Right lobe of liver (tissue), 6 donors: ENCODE measurements at regions of chr16 and their contacts with region 1.

Region 1: DNA sequence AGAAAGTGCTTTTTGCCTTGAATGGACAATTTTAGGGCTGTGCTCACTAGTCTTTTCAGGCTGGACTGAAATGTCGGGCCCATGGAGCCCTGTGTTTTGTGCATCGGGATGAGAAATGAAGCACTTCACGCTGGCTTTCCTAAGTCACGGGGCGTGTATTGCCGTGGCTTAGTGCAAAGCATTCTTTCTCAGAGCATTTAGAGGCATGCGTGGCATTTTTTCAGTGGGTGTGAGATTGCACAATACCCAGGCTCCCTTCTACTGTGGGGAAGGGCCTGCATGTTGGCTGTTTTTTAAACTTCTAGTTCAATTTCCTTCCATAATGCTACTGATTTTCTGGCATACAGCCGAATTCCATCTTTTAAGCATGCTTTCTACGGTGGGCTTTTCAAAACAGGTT is 12.6 kb upstream of the POLR3E start:
- DNase-seq: no peak
- ATAC-seq: no peak
- H3K4me3 ChIP-seq: no peak overlapping the region
- H3K27ac ChIP-seq: no peak overlapping the region
- H3K4me1 ChIP-seq: no peaks in the 10 kb centered on the region
- H3K27me3 ChIP-seq: no peaks in the 10 kb centered on the region
- CTCF ChIP-seq: no peak
- POLR2A ChIP-seq: no peak

Region 2: GRCh38 chr16:22217889-22218730 is 66.5 kb before region 1 on chr16:
- intact Hi-C with region 1: loop called in 1 of 2 experiments (anchors 10 kb)
- DNase-seq: no peak
- ATAC-seq: no peak
- H3K4me3 ChIP-seq: no peak overlapping the region
- H3K27ac ChIP-seq: no peak overlapping the region
- H3K4me1 ChIP-seq: peaks cover 0 to 11% (median 3%) of the 10 kb centered on the region in 4 donors
- H3K27me3 ChIP-seq: no peaks in the 10 kb centered on the region
- CTCF ChIP-seq: no peak
- POLR2A ChIP-seq: no peak